HAP-1 (cell line): ENCODE measurements at regions of chr4 and their contacts with region 1.

Region 1: GRCh38 chr4:103204111-103204510 is 6.0 kb upstream of the CENPE start:
- DNase-seq: peak in 1 of 2 experiments; percentile 39
- H3K4me3 ChIP-seq: no peak overlapping the region
- H3K4me1 ChIP-seq: no peaks in the 10 kb centered on the region
- H3K27me3 ChIP-seq: no peaks in the 10 kb centered on the region; the same call in 1 of the 2 replicates

Region 2: GRCh38 chr4:103786014-103786413 is 581.9 kb after region 1 on chr4:
- in situ Hi-C with region 1: loop called (anchors 10 kb)
- DNase-seq: peak; percentile 64 to 76
- H3K4me3 ChIP-seq: no peak overlapping the region
- H3K4me1 ChIP-seq: peaks cover 4% of the 10 kb centered on the region; the same call in 1 of the 2 replicates
- H3K27me3 ChIP-seq: no peaks in the 10 kb centered on the region

Region 3: GRCh38 chr4:103934178-103934789 is 730.2 kb after region 1 on chr4:
- in situ Hi-C with region 1: loop called (anchors 25 kb)
- DNase-seq: peak; percentile 47 to 50
- H3K4me3 ChIP-seq: no peak overlapping the region
- H3K4me1 ChIP-seq: no peaks in the 10 kb centered on the region
- H3K27me3 ChIP-seq: no peaks in the 10 kb centered on the region